AG04449 (cell line): ENCODE measurements at regions of chr11 and their contacts with region 1.

Region 1: DNA sequence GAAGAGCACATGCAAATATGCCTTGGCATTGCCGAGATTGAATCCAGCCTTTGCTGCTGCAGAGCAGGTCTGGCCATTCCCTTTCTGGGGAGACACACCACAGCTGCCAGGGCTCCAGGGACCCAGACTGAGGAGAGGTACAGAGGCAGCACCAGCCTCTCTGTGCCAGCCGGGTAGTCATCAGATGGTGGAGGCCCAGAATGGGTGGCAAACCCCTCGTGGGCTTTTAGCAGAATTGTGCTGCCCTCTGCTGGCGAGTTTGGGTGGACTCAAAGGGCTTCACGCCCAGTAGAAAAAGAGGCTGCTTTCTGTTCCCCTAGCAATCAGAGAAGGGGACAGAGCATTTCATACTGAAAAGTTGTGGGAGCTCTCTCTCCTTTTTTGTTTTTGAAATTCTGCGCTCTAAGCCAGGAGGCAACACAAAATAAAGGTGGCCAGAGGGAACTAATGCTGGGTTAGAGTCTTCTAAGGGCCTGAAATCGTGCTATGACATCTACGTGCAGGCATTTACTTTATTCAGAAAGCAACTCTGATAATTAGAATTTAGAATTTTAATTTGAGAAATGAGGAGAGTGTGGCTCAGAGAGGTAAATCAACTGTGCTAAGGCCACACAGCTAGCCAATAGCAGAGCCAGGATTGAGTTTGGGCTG is 158.8 kb upstream of the NAV2 start:
- DNase-seq: no peak
- H3K4me3 ChIP-seq: no peak overlapping the region
- CTCF ChIP-seq: peak; percentile 74

Region 2: GRCh38 chr11:19071255-19071654 is 482.6 kb before region 1 on chr11:
- CTCF ChIA-PET with region 1: interaction called, 332 read pairs
- POLR2A ChIA-PET with region 1: no interaction called
- DNase-seq: peak; percentile 40
- H3K4me3 ChIP-seq: peak overlapping the region; percentile 44; the same call in 1 of the 2 replicates
- CTCF ChIP-seq: peak; percentile 96

Region 3: GRCh38 chr11:19259487-19260345 is 294.1 kb before region 1 on chr11:
- CTCF ChIA-PET with region 1: interaction called, 132 read pairs
- POLR2A ChIA-PET with region 1: no interaction called
- DNase-seq: no peak
- H3K4me3 ChIP-seq: no peak overlapping the region
- CTCF ChIP-seq: peak; percentile 84

Region 4: GRCh38 chr11:19311308-19312030 is 242.3 kb before region 1 on chr11:
- CTCF ChIA-PET with region 1: interaction called, 81 read pairs
- POLR2A ChIA-PET with region 1: no interaction called
- DNase-seq: no peak
- H3K4me3 ChIP-seq: no peak overlapping the region
- CTCF ChIP-seq: peak; percentile 88

Region 5: GRCh38 chr11:19345848-19346681 is 207.7 kb before region 1 on chr11:
- CTCF ChIA-PET with region 1: interaction called, 12 read pairs
- POLR2A ChIA-PET with region 1: no interaction called
- DNase-seq: no peak
- H3K4me3 ChIP-seq: peak overlapping the region; percentile 9
- CTCF ChIP-seq: peak; percentile 11

Region 6: GRCh38 chr11:19742588-19743292 is 188.9 kb after region 1 on chr11:
- CTCF ChIA-PET with region 1: interaction called, 683 read pairs
- POLR2A ChIA-PET with region 1: no interaction called
- DNase-seq: no peak
- H3K4me3 ChIP-seq: no peak overlapping the region
- CTCF ChIP-seq: peak; percentile 78